ENCODE measurements at regions of chr2 and their contacts with region 1.

Region 1: DNA sequence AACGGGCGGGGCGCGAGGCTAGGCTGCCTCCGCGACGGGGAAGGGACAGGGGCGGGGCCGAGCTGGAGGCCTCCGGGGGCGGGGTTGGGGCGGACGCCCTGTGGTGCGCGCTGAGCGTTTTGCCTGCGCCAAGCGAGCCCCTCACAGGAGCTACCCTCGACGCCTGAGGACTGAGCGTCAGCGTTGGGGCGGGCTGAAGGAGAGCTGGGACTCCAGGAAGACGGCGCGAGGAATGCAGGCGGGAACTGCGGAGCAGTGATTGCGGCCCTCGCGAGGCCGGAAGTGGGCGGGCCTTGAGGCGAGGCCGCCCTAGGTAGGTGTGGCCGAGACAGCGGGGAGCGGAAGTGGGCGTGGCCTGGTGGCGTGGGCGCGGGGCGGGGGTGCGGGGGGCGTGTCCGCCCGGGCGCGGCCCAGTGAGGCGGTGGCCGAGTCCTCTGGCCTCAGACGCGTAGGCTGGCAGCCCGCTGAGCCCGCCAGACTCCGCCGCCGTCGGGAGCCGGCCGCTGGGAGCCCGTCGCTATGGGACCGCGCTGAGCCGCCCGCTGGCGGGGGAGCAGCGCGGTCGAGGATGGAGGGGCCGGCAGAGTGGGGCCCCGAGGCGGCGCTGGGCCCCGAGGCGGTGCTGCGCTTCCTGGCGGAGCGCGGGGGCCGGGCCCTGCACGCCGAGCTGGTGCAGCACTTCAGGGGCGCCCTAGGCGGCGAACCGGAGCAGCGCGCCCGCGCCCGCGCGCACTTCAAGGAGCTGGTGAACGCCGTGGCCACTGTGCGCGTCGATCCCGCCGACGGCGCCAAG is at the starts of genes SEPTIN10 and SOWAHC:
- DNase-seq: peak; percentile 95 to 96
- ATAC-seq: peak; percentile 94 to 99 (median 98)
- H3K4me3 ChIP-seq: peak within 1 kb of the TSS; percentile 53 to 93 (median 77)
- H3K27ac ChIP-seq: peak within 1 kb of the TSS; percentile 95 to 99 (median 99)
- H3K4me1 ChIP-seq: peaks cover 0 to 50% (median 32%) of the 10 kb centered on the region in 9 donors
- H3K27me3 ChIP-seq: peaks cover 0 to 74% (median 0%) of the 10 kb centered on the region in 7 donors
- CTCF ChIP-seq: peak in 1 of 9 donors; percentile 8
- total RNA-seq, gene SEPTIN10: 39.8 to 61.0 (median 53.0) TPM
- total RNA-seq, gene SOWAHC: 1.7 to 3.9 (median 2.1) TPM

Region 2: GRCh38 chr2:109545828-109546713 is 68.0 kb before region 1 on chr2:
- intact Hi-C with region 1: loop called in 3 of 10 experiments (anchors 5 kb)
- DNase-seq: peak; percentile 61 to 66
- ATAC-seq: peak; percentile 79 to 95 (median 89)
- H3K4me3 ChIP-seq: no peak overlapping the region
- H3K27ac ChIP-seq: no peak overlapping the region
- H3K4me1 ChIP-seq: peaks cover 0 to 3% (median 0%) of the 10 kb centered on the region in 9 donors
- H3K27me3 ChIP-seq: no peaks in the 10 kb centered on the region
- CTCF ChIP-seq: peak; percentile 80 to 97 (median 94)

Region 3: DNA sequence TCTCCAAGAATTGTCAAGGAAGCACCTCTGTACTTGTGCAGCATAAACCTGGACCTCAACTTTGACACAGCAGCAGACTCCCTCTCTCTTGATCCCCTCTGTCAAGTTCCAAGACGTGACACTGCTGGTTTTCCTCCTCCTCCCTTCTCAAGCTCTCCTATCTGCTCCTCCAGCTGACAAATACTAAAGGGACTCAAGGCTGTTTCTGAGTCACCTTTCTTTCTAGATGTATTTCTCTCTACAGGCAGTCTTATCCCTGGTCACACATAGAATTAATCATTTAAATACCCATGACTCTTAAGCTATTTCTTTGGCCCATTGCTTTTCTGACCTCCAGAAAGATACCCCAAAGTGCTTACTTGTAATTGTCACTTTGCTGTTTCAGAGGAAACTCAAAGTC is 53.9 kb before region 1 on chr2:
- intact Hi-C with region 1: loop called in 2 of 10 experiments (anchors 2 to 5 kb)
- DNase-seq: no peak
- ATAC-seq: no peak
- H3K4me3 ChIP-seq: no peak overlapping the region
- H3K27ac ChIP-seq: no peak overlapping the region
- H3K4me1 ChIP-seq: peaks cover 0 to 26% (median 0%) of the 10 kb centered on the region in 9 donors
- H3K27me3 ChIP-seq: no peaks in the 10 kb centered on the region
- CTCF ChIP-seq: no peak

Region 4: GRCh38 chr2:109663721-109664120 is 49.6 kb after region 1 on chr2:
- intact Hi-C with region 1: loop called in 1 of 10 experiments (anchors 10 kb)
- DNase-seq: peak; percentile 31 to 82
- ATAC-seq: peak; percentile 64 to 98 (median 91)
- H3K4me3 ChIP-seq: no peak overlapping the region
- H3K27ac ChIP-seq: peak overlapping the region in 1 of 10 donors; percentile 40
- H3K4me1 ChIP-seq: peaks cover 0 to 15% (median 10%) of the 10 kb centered on the region in 9 donors
- H3K27me3 ChIP-seq: no peaks in the 10 kb centered on the region
- CTCF ChIP-seq: no peak

Region 5: GRCh38 chr2:109680523-109681297 is 66.6 kb after region 1 on chr2:
- intact Hi-C with region 1: loop called in 1 of 10 experiments (anchors 5 kb)
- DNase-seq: no peak
- ATAC-seq: no peak
- H3K4me3 ChIP-seq: no peak overlapping the region
- H3K27ac ChIP-seq: peak overlapping the region in 1 of 10 donors; percentile 42
- H3K4me1 ChIP-seq: peaks cover 0 to 28% (median 9%) of the 10 kb centered on the region in 9 donors
- H3K27me3 ChIP-seq: no peaks in the 10 kb centered on the region
- CTCF ChIP-seq: no peak

Region 6: GRCh38 chr2:109690822-109691547 is 76.9 kb after region 1 on chr2:
- intact Hi-C with region 1: loop called in 4 of 10 experiments (anchors 5 to 10 kb)
- DNase-seq: peak; percentile 39 to 51
- ATAC-seq: peak; percentile 75 to 94 (median 91)
- H3K4me3 ChIP-seq: no peak overlapping the region
- H3K27ac ChIP-seq: peak overlapping the region; percentile 70 to 93 (median 81)
- H3K4me1 ChIP-seq: peaks cover 0 to 34% (median 21%) of the 10 kb centered on the region in 9 donors
- H3K27me3 ChIP-seq: no peaks in the 10 kb centered on the region
- CTCF ChIP-seq: no peak